Mammary epithelial cell (primary cell): ENCODE measurements at regions of chr5 and their contacts with region 1.

Region 1: GRCh38 chr5:78162253-78162862 is 132.1 kb downstream of the AP3B1 start:
- DNase-seq: no peak
- H3K4me3 ChIP-seq: no peak overlapping the region
- H3K27ac ChIP-seq: no peak overlapping the region
- H3K4me1 ChIP-seq: no peaks in the 10 kb centered on the region
- H3K27me3 ChIP-seq: no peaks in the 10 kb centered on the region
- CTCF ChIP-seq: peak; percentile 52 to 59

Region 2: GRCh38 chr5:77867194-77867691 is 295.1 kb before region 1 on chr5:
- CTCF ChIA-PET with region 1: no interaction called
- dilution Hi-C with region 1: no loop called
- in situ Hi-C with region 1: no loop called
- intact Hi-C with region 1: loop called (anchors 2 kb)
- DNase-seq: no peak
- H3K4me3 ChIP-seq: no peak overlapping the region
- H3K27ac ChIP-seq: no peak overlapping the region
- H3K4me1 ChIP-seq: no peaks in the 10 kb centered on the region
- H3K27me3 ChIP-seq: no peaks in the 10 kb centered on the region
- CTCF ChIP-seq: peak in 1 of 2 donors; percentile 17